RWPE1 (cell line): ENCODE measurements at regions of chr5 and their contacts with region 1.

Region 1: GRCh38 chr5:154405078-154405792 is 40.6 kb upstream of the SAP30L start:
- DNase-seq: peak; percentile 95
- H3K27ac ChIP-seq: peak overlapping the region; percentile 43
- CTCF ChIP-seq: peak; percentile 94

Region 2: DNA sequence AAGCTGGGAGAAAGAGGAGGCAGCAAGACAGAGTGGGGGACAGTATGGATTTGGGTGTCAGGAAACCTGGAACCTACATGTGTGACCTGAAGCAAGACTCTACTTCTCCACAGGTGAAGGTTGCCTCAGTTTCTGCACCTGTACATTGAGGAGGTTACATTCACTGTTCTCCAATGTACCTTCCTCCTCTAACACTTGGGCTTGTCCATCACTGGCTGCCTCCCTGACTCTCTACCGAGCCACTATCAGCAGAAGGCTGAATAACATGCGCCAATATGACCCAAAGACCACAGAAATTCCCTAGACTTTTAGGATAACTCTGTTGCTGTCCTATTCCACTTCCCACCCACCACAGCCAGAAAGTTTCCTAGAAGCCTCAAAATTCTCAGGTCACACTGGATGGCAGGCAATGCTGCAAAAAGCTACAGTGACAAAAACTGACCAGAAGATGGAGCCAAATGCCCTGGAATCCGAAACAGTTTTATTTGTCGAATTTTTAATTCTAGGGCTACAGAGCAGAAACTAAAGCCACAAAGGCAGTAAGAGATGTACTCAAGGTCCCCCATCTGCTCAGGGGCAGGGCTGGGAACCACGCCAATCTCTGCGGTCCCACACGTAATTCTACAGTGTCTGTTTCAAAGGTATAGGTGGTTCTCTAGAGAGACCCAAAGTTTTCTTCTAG is 431.0 kb before region 1 on chr5:
- CTCF ChIA-PET with region 1: interaction called, 12 read pairs
- POLR2A ChIA-PET with region 1: no interaction called
- DNase-seq: peak; percentile 77
- H3K27ac ChIP-seq: no peak overlapping the region
- CTCF ChIP-seq: peak; percentile 87

Region 3: DNA sequence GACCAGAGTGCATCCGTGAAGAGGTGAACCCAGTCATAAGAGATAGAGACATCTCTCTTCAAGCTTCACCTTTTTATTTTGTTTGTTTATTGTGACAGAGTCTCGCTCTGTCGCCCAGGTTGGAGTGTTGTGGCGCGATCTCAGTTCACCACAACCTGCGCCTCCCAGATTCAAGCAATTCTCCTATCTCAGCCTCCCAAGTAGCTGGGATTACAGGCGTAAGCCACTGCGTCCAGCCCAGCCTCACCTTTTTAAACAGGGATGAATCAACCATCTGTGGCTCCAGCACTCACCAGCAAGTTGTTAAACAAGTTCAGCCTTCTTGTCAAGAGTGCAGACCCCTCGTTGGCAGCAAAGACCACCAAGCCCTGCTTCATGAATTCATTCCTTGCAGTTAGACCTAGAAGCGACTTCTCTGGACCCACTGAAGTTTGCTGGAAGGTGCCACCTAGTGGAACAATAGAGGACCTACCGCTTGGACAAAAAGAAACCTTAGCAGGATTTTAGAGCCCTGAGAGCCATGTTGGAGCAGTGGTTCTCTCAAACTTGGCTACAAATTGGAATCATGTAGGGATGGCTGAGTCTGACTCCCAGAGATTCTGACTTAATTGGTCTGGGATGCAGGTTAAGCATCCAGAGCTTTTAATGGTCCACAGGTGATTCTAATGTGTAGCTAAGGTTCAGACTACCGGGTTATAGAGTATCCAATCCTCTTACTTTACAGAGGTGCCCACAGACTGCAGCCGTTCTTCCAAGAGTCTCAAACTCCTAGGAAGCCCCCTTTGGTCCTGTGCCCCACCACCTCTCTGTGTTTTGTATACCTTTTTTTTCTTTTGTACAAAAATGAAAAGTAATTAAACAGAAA is 225.2 kb before region 1 on chr5:
- CTCF ChIA-PET with region 1: interaction called, 26 read pairs
- POLR2A ChIA-PET with region 1: no interaction called
- DNase-seq: peak; percentile 77
- H3K27ac ChIP-seq: no peak overlapping the region
- CTCF ChIP-seq: peak; percentile 93

Region 4: GRCh38 chr5:154285622-154286408 is 119.4 kb before region 1 on chr5:
- CTCF ChIA-PET with region 1: interaction called, 11 read pairs
- POLR2A ChIA-PET with region 1: no interaction called
- DNase-seq: peak; percentile 52
- H3K27ac ChIP-seq: peak overlapping the region; percentile 53; the same call in 1 of the 2 replicates
- CTCF ChIP-seq: no peak